ENCODE measurements at regions of chr20 and their contacts with region 1.

Region 1: DNA sequence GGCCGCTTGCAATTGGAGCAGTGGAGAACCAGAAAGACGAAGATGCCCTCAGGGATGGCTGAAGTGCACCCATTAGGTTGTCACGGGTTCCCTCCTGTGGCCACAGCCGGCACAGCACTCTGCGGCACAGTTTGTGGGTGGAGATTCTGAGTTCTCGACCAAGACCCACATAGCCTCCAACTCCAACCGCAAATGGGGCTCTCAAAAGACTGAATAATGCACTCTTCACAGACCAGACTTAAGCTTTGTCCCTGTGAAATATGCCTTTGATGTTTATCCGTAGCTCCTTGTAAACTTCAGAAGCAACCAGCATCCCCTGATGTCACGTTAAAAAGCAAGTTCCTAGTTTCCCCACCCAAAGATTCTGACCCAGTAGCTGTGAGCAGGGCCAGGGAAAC is 934 bp upstream of the CST9 start:
- DNase-seq: peak; percentile 60 to 77
- ATAC-seq: peak; percentile 97

Region 2: GRCh38 chr20:22949331-22950109 is 657.1 kb before region 1 on chr20:
- intact Hi-C with region 1: no loop called
- DNase-seq: no peak
- ATAC-seq: no peak

Region 3: GRCh38 chr20:23441850-23442313 is 164.8 kb before region 1 on chr20:
- intact Hi-C with region 1: loop called in 1 of 2 experiments (anchors 5 kb)
- DNase-seq: peak in 1 of 2 donors; percentile 63
- ATAC-seq: peak; percentile 77